Activated CD8-positive, alpha-beta T cell treated with anti-CD3 and anti-CD28 coated beads, Interleukin-2, amount 10 ng/mL, durations not matched to agents 7 days and 5 days (primary cell): ENCODE measurements at regions of chr6 and their contacts with region 1.

Region 1: DNA sequence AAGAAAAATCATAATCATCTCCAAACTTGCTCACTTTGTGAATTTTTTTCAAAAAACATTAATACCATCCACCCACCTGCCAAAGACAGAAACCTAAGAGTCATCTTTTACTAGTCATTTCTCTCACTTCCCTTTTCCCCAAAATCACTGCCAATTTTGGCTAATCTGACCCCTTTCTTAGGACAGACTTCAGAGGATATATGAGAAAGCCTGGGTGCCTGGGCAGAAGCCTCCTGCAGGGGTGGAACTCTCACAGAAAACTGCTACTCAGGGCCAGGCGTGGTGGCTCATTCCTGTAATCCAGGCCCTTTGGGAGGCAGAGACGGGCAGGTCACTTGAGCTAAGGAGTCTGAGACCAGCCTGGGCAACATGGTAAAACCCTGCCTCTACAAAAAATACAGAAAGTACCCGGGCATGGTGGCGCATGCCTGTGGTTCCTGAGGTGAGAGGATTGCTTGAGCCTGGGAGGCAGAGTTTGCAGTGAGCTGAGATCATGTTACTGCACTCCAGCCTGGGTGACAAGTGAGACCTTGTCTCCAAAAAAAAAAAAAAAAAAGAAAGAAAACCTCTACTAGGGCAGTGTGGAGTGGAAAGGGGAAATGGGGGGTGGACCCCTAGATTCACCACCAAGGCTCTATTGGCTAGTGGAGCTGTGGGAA is 3.8 kb downstream of the DEK start:
- DNase-seq: peak; percentile 38
- ATAC-seq: no peak
- H3K4me3 Mint-ChIP-seq: peak overlapping the region; percentile 86
- H3K27ac Mint-ChIP-seq: peak overlapping the region; percentile 39
- H3K4me1 Mint-ChIP-seq: peaks cover 57% of the 10 kb centered on the region
- H3K27me3 Mint-ChIP-seq: no peaks in the 10 kb centered on the region

Region 2: GRCh38 chr6:18242062-18242851 is 18.3 kb before region 1 on chr6:
- CTCF ChIA-PET with region 1: no interaction called
- POLR2A ChIA-PET with region 1: interaction called, 11 read pairs
- DNase-seq: no peak
- ATAC-seq: no peak
- H3K4me3 Mint-ChIP-seq: no peak overlapping the region
- H3K27ac Mint-ChIP-seq: peak overlapping the region; percentile 64
- H3K4me1 Mint-ChIP-seq: peaks cover 58% of the 10 kb centered on the region
- H3K27me3 Mint-ChIP-seq: no peaks in the 10 kb centered on the region

Region 3: DNA sequence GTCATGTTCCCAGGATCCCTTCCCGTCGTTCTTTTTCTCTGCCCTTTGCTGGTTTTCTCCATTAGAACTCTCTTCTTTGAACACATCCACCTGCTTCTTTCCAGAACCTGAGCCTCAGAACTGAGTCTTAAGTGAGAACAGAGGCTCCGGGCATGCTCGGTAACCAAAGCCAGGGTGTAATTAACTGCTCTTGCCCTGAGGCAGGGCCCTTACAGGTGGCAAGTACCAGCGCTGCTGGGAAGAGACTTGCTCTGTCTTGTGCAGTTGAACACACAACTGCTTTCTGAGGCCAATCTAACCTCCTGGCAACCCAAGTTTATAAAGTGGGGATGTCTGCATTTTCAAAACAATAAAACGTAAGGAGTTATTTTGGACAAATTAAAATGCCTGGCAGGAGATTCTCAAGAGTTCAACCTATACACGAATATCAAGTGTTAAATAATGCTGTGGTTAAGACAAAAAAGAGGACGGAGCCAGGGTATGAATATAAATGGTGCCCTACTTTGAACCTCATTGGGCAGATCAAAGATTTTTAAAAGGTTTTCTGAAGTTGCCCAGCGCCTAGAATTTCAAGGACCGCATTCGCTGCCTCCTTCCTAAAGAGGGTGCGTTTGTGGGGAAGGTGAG is 16.1 kb after region 1 on chr6:
- CTCF ChIA-PET with region 1: no interaction called
- POLR2A ChIA-PET with region 1: no interaction called
- DNase-seq: no peak
- ATAC-seq: no peak
- H3K4me3 Mint-ChIP-seq: peak overlapping the region; percentile 44
- H3K27ac Mint-ChIP-seq: no peak overlapping the region
- H3K4me1 Mint-ChIP-seq: peaks cover 10% of the 10 kb centered on the region
- H3K27me3 Mint-ChIP-seq: peaks cover 61% of the 10 kb centered on the region

Region 4: GRCh38 chr6:18567380-18567779 is 306.8 kb after region 1 on chr6:
- CTCF ChIA-PET with region 1: no interaction called
- POLR2A ChIA-PET with region 1: no interaction called
- DNase-seq: no peak
- ATAC-seq: no peak
- H3K4me3 Mint-ChIP-seq: no peak overlapping the region
- H3K27ac Mint-ChIP-seq: no peak overlapping the region
- H3K4me1 Mint-ChIP-seq: no peaks in the 10 kb centered on the region
- H3K27me3 Mint-ChIP-seq: peaks cover 7% of the 10 kb centered on the region